Activated CD4-positive, alpha-beta T cell treated with anti-CD3 and anti-CD28 coated beads for 36 hours (primary cell): ENCODE measurements at regions of chr5 and their contacts with region 1.

Region 1: GRCh38 chr5:137498736-137499505 is at the start of gene SPOCK1:
- DNase-seq: peak; percentile 81
- ATAC-seq: peak; percentile 96
- H3K4me3 Mint-ChIP-seq: no peak within 1 kb of the TSS
- H3K27ac Mint-ChIP-seq: no peak within 1 kb of the TSS
- H3K4me1 Mint-ChIP-seq: no peaks in the 10 kb centered on the region
- H3K27me3 Mint-ChIP-seq: peaks cover 25% of the 10 kb centered on the region
- total RNA-seq, gene SPOCK1: not detected

Region 2: GRCh38 chr5:136285096-136285855 is 1213.6 kb before region 1 on chr5:
- CTCF ChIA-PET with region 1: no interaction called
- POLR2A ChIA-PET with region 1: no interaction called
- intact Hi-C with region 1: no loop called
- DNase-seq: no peak
- ATAC-seq: no peak
- H3K4me3 Mint-ChIP-seq: no peak overlapping the region
- H3K27ac Mint-ChIP-seq: no peak overlapping the region
- H3K4me1 Mint-ChIP-seq: no peaks in the 10 kb centered on the region
- H3K27me3 Mint-ChIP-seq: peaks cover 11% of the 10 kb centered on the region

Region 3: DNA sequence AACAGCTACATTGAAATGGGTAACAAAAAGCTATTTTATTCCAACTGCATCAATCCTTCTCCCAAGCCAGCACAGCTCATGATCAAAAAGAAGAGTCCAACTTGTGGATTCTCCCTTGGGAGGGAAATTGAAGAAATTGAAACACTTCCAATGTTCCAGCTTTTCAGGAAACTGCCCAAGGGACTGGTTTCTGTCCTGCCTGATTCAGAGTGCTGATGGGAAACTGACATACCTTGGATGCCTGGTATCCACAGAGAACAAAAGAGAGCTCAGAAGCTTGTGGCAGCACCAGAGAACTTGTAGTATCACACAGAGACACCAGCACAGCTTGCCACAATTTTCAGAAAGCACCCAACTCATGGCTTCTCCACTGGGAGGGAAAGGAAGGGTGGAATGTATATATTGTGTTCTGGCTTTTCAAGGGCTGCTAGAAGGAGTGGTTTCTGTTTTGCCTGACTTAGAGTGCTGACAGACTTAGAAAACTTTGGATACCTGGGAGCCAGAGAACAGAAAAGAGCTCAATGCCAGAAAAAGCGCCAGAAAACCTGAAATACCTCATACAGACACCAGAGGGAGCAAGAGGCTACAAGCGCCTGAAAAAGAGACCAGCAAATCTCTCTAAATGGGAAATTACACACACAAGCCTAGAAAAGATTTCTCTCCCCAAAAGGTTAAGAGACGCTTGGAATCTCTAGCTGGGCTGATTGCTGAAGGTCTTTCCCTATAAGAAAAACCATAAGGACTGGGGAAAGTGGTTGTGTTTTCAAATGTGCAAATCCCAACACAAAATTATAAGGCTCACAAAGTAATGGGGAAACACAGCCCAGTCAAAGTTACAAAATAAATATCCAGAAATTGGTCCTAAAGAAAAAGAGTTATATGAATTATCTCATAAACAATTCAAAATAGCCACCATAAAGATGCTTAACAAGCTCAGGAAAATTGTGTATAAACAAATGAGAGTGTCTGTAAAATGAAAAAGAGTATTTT is 178.6 kb before region 1 on chr5:
- CTCF ChIA-PET with region 1: interaction called, 41 read pairs
- POLR2A ChIA-PET with region 1: no interaction called
- intact Hi-C with region 1: loop called (anchors 1 kb)
- DNase-seq: peak; percentile 26
- ATAC-seq: no peak
- H3K4me3 Mint-ChIP-seq: no peak overlapping the region
- H3K27ac Mint-ChIP-seq: no peak overlapping the region
- H3K4me1 Mint-ChIP-seq: no peaks in the 10 kb centered on the region
- H3K27me3 Mint-ChIP-seq: peaks cover 20% of the 10 kb centered on the region

Region 4: DNA sequence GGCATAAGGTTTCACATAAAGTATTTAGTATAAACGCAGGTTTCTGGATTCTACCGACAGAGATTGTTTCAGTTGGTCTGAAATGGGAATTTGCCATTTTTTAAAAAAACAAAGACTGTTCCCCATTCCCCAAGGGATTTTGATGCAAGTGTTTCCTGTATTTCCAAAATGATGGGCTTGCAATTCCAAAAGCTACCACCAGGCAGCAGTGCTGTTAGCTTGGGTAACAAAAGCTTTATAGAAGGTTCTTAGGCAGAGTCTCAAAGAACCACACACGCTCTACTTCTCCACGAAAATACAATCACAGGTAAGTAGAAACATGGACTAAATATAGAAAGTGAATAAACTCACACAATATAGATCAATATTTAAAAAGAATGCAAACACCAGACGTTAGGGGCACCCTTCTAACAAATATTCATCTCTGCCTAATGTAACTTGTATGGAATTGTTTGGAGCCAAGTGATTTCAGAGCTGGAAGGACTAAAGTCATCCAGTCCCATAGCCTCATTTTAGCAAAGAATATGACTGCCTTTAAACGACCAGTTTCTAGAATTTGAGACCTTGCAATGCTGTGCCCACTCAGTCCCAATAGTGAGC is 154.1 kb before region 1 on chr5:
- CTCF ChIA-PET with region 1: interaction called, 15 read pairs
- POLR2A ChIA-PET with region 1: no interaction called
- intact Hi-C with region 1: loop called (anchors 1 kb)
- DNase-seq: peak; percentile 53
- ATAC-seq: no peak
- H3K4me3 Mint-ChIP-seq: no peak overlapping the region
- H3K27ac Mint-ChIP-seq: no peak overlapping the region
- H3K4me1 Mint-ChIP-seq: no peaks in the 10 kb centered on the region
- H3K27me3 Mint-ChIP-seq: no peaks in the 10 kb centered on the region